Activated naive CD4-positive, alpha-beta T cell treated with anti-CD3 and anti-CD28 coated beads, Interleukin-2, amount 10 ng/mL, durations not matched to agents 7 days and 5 days (primary cell): ENCODE measurements at regions of chr2 and their contacts with region 1.

Region 1: GRCh38 chr2:30711646-30712085 is 95.6 kb downstream of the CAPN13 start:
- DNase-seq: peak; percentile 93
- H3K4me3 Mint-ChIP-seq: no peak overlapping the region
- H3K27ac Mint-ChIP-seq: no peak overlapping the region
- H3K4me1 Mint-ChIP-seq: peaks cover 4% of the 10 kb centered on the region
- H3K27me3 Mint-ChIP-seq: peaks cover 5% of the 10 kb centered on the region

Region 2: GRCh38 chr2:30155889-30156658 is 555.6 kb before region 1 on chr2:
- CTCF ChIA-PET with region 1: interaction called, 49 read pairs
- DNase-seq: no peak
- H3K4me3 Mint-ChIP-seq: no peak overlapping the region
- H3K27ac Mint-ChIP-seq: no peak overlapping the region
- H3K4me1 Mint-ChIP-seq: peaks cover 6% of the 10 kb centered on the region
- H3K27me3 Mint-ChIP-seq: no peaks in the 10 kb centered on the region

Region 3: GRCh38 chr2:30208452-30208851 is 503.2 kb before region 1 on chr2:
- CTCF ChIA-PET with region 1: interaction called, 252 read pairs
- DNase-seq: peak; percentile 56
- H3K4me3 Mint-ChIP-seq: no peak overlapping the region
- H3K27ac Mint-ChIP-seq: peak overlapping the region; percentile 63
- H3K4me1 Mint-ChIP-seq: peaks cover 20% of the 10 kb centered on the region
- H3K27me3 Mint-ChIP-seq: peaks cover 23% of the 10 kb centered on the region

Region 4: DNA sequence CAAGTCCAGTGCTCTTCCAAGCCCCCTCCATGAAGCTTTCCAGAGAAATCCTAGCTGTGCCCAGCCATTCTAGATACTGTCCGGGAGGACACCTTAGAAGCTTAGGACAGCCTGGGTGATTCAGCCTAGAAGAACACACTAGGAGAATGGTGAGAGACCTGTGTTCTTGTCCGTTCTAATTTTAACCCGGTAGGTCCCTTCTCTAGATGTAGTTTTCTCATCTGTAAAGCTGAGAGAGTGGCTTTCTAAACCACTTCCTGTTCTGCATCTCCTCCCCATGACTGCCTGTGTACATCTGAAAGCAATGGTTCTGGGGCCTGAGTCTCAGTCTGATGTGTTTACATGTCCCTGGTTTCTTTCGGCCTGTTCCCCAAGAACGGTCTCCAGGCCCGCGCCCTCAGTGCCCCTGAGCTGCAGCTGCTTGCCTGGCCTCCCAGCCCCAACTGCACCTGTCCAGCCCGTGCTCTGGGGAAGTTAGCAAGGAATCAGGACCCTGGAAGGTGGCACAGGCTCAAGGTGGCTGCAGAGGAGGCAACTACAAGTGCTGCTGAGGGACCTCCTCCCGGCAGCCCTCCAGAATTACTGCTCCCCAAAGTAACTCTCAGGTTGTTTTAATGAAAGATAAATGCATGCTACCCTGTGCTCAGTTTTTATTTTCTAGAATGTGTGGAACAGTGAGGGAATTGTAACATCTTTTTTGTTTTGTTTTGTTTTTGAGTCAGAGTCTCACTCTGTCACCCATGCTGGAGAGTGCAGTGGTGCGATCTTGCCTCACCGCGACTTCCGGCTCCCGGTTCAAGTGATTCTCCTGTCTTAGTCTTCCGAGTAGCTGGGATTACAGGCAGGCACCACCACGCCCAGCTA is 374.5 kb before region 1 on chr2:
- CTCF ChIA-PET with region 1: interaction called, 12 read pairs
- DNase-seq: peak; percentile 74
- H3K4me3 Mint-ChIP-seq: peak overlapping the region; percentile 72
- H3K27ac Mint-ChIP-seq: peak overlapping the region; percentile 99
- H3K4me1 Mint-ChIP-seq: peaks cover 72% of the 10 kb centered on the region
- H3K27me3 Mint-ChIP-seq: no peaks in the 10 kb centered on the region

Region 5: GRCh38 chr2:30862054-30862651 is 150.5 kb after region 1 on chr2:
- CTCF ChIA-PET with region 1: interaction called, 42 read pairs
- DNase-seq: peak; percentile 61
- H3K4me3 Mint-ChIP-seq: no peak overlapping the region
- H3K27ac Mint-ChIP-seq: no peak overlapping the region
- H3K4me1 Mint-ChIP-seq: peaks cover 13% of the 10 kb centered on the region
- H3K27me3 Mint-ChIP-seq: peaks cover 22% of the 10 kb centered on the region

Region 6: GRCh38 chr2:31523871-31524492 is 812.3 kb after region 1 on chr2:
- CTCF ChIA-PET with region 1: interaction called, 20 read pairs
- DNase-seq: peak; percentile 69
- H3K4me3 Mint-ChIP-seq: no peak overlapping the region
- H3K27ac Mint-ChIP-seq: no peak overlapping the region
- H3K4me1 Mint-ChIP-seq: no peaks in the 10 kb centered on the region
- H3K27me3 Mint-ChIP-seq: no peaks in the 10 kb centered on the region